Activated naive CD4-positive, alpha-beta T cell treated with anti-CD3 and anti-CD28 coated beads for 36 hours (primary cell): ENCODE measurements at regions of chr9 and their contacts with region 1.

Region 1: DNA sequence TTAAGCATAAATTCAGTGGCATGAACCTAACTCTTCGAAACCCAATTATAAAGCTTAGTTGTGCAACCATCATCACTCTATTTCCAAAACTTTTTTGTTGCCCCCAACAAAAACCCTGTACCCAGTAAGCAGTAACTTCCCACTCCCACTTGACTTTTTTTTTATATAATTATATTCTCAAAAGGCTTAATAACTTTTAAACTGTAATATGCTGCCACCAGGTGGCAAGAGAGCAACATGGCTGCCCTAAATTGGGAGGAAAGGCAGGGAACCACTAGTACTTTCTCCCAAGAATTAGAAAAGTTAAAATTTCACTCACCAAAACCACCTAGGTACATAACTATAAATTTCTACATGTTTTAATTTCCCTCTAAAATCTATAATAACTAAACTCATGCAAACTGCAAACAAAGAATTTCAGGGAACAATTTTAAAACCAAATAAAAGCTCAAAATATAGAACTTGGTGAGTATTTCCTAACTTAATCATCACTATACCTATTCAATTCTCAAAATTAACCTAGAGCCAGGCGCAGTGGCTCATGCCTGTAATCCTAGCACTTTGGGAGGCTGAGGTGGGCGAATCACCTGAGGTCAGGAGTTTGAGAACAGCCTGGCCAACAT is 50.2 kb upstream of the RNF38 start:
- DNase-seq: peak; percentile 37
- H3K4me3 Mint-ChIP-seq: no peak overlapping the region
- H3K27ac Mint-ChIP-seq: no peak overlapping the region
- H3K4me1 Mint-ChIP-seq: peaks cover 16% of the 10 kb centered on the region
- H3K27me3 Mint-ChIP-seq: no peaks in the 10 kb centered on the region

Region 2: DNA sequence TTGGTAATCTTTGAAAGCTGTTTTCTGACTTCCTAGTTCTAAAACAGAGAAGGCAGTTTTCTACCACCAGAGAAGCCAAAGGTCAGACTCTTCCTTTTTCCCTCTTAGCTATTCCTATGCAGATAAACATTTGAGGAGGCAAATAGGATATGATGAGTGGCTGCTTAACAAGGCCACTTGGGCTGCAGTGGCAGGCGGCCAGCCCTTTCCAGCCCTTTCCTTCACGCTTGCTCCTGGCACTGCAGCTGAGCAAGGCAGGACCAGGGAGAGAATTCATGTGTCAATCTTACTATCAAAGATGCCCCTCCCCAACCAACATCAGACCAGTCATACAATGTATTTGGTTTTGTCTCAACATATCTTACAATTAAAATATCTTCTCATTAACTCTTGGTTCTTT is 13.3 kb before region 1 on chr9:
- CTCF ChIA-PET with region 1: interaction called, 24 read pairs
- intact Hi-C with region 1: no loop called
- DNase-seq: no peak
- H3K4me3 Mint-ChIP-seq: no peak overlapping the region
- H3K27ac Mint-ChIP-seq: no peak overlapping the region
- H3K4me1 Mint-ChIP-seq: peaks cover 31% of the 10 kb centered on the region
- H3K27me3 Mint-ChIP-seq: no peaks in the 10 kb centered on the region

Region 3: DNA sequence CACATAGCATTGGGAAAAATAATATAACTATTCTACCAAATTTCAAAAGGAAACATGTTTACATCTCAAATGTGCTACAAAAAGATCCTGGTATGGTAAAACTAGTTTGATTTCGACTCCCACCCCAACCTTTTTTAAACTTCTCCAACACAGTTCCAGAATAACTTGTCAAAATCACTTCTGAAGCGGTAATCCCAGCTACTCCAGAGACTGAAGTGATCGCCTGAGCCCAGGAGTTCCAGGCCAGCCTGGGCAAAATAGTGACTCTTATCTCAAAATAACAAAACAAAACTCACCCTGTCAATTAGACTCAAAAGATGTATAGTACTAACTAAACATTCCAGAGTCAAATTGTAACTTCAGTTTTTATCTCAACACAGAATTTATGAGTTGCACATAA is 21.1 kb after region 1 on chr9:
- CTCF ChIA-PET with region 1: no interaction called
- intact Hi-C with region 1: no loop called
- DNase-seq: no peak
- H3K4me3 Mint-ChIP-seq: peak overlapping the region; percentile 34
- H3K27ac Mint-ChIP-seq: peak overlapping the region; percentile 89
- H3K4me1 Mint-ChIP-seq: peaks cover 34% of the 10 kb centered on the region
- H3K27me3 Mint-ChIP-seq: no peaks in the 10 kb centered on the region

Region 4: GRCh38 chr9:36551129-36551528 is 100.9 kb after region 1 on chr9:
- CTCF ChIA-PET with region 1: interaction called, 10 read pairs
- intact Hi-C with region 1: loop called (anchors 1 kb)
- DNase-seq: no peak
- H3K4me3 Mint-ChIP-seq: no peak overlapping the region
- H3K27ac Mint-ChIP-seq: no peak overlapping the region
- H3K4me1 Mint-ChIP-seq: peaks cover 1% of the 10 kb centered on the region
- H3K27me3 Mint-ChIP-seq: no peaks in the 10 kb centered on the region